A549 (cell line): ENCODE measurements at regions of chr12 and their contacts with region 1.

Region 1: GRCh38 chr12:22443379-22444316 is 100.7 kb downstream of the C2CD5 start:
- DNase-seq: peak; percentile 51 to 89
- ATAC-seq: peak; percentile 100
- H3K4me3 ChIP-seq: no peak overlapping the region
- H3K27ac ChIP-seq: no peak overlapping the region
- H3K4me1 ChIP-seq: no peaks in the 10 kb centered on the region
- CTCF ChIP-seq: peak; percentile 88
- EP300 ChIP-seq: no peak
- POLR2A ChIP-seq: no peak
- RAD21 ChIP-seq: peak; percentile 90 to 94

Region 2: DNA sequence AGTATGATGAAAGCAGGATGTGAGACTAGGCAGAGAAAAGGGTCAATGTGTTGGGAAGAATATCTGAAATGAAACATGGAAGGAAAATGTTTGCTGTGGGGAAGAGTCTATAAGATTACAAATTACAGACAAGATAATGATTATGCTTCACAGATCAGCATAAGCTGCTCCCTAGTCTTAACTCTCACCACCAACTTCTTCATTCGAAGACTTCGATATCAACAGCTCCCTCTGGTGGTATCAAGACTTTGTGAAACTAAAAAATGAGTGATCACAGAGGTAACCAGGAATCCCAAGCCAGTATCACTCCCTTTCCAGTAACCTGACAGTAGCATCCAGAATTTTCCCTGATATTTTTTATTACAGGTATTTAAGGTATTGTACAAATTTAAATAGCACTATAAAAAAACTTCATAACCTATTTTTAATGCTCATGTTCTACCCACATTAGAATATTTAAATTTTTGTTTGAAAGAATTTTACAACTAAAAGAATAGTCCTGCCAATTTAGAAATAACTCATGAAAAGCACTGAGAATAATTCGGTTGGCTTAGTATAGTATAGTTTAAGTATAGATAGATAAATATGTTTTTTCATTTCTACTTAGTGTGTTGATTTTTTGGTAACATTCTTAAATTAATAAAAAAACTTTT is 16.3 kb after region 1 on chr12:
- CTCF ChIA-PET with region 1: interaction called, 16 read pairs
- POLR2A ChIA-PET with region 1: no interaction called
- DNase-seq: peak; percentile 23 to 64
- ATAC-seq: peak; percentile 50 to 85; a peak in 4 of 6 replicates
- H3K4me3 ChIP-seq: no peak overlapping the region
- H3K27ac ChIP-seq: no peak overlapping the region
- H3K4me1 ChIP-seq: no peaks in the 10 kb centered on the region
- CTCF ChIP-seq: peak; percentile 76
- EP300 ChIP-seq: no peak
- POLR2A ChIP-seq: no peak
- RAD21 ChIP-seq: peak; percentile 41 to 42